Right ventricle myocardium superior (tissue), 1 donor: ENCODE measurements at regions of chr5 and their contacts with region 1.

Region 1: GRCh38 chr5:62331921-62332320 is 25.9 kb downstream of the KIF2A start:
- DNase-seq: no peak
- ATAC-seq: no peak

Region 2: DNA sequence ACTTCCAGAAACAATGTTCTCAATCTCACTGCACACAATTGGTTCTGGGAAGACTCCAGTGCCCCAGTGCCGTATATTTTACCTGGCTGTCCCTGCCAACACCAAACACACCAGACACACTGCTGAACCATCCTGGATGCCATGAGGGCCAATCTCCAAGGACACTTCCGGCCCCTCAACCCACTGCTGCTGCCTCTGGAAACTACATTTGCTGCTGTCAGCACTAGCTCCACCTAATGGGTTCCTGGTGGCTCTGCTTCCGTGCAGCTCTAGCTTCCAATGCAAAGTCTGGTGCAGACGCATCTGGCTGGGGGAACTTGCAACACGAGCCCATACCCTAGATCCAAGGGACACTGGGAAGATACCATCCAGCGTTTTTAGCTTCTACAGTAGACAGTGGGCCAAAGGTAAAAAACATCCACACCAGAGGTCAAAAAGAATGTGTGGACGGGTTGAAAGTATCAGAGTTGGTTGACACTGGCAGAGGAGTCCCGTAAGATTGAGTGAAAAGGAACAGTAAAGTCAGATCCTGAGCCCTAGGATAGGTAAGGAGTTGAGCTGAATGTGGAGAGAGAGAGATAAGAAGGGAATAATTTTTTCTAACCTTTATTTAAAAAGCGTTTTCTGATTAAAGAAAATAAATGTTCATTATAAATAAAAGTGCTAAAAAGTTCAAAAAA is 125.6 kb before region 1 on chr5:
- intact Hi-C with region 1: loop called (anchors 10 kb)
- DNase-seq: no peak
- ATAC-seq: no peak

Region 3: GRCh38 chr5:62271876-62272275 is 60.0 kb before region 1 on chr5:
- intact Hi-C with region 1: no loop called
- DNase-seq: no peak
- ATAC-seq: no peak

Region 4: DNA sequence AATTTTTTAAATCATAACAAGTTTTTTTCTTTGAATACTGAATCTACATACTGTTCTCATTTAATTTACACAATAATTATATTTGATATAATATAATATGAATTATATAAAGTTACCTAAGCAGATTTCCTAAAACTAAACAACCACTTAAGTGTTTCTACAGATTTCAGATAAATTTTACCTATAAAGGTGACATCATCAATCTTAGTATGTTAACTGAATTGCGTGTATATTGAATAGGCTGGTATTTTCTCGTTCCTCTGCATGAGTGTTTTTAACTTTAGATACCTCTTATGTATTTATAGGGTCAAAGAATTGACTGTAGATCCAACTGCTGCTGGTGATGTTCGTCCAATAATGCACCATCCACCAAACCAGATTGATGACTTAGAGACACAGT is 41.5 kb after region 1 on chr5:
- intact Hi-C with region 1: no loop called
- DNase-seq: no peak
- ATAC-seq: no peak

Region 5: DNA sequence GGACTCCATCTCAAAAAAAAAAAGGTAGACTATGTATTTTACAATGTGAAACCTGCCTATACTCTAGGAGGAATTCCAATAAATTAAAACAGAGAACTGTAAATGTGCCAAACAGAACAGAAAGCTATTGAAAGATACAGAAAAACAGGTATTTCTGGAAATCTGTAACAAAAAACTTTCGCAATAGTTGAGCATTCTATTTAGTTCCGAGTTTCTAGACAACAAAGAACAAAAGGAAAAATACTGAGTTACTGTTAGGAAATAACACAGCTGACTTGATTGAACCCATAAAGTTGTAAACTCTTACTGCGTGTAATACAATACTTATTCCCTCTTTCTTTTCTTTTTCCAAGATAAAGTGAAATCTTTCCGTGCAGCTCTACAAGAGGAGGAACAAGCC is 53.2 kb after region 1 on chr5:
- intact Hi-C with region 1: no loop called
- DNase-seq: no peak
- ATAC-seq: no peak